PC-3 (cell line): ENCODE measurements at regions of chr6 and their contacts with region 1.

Region 1: DNA sequence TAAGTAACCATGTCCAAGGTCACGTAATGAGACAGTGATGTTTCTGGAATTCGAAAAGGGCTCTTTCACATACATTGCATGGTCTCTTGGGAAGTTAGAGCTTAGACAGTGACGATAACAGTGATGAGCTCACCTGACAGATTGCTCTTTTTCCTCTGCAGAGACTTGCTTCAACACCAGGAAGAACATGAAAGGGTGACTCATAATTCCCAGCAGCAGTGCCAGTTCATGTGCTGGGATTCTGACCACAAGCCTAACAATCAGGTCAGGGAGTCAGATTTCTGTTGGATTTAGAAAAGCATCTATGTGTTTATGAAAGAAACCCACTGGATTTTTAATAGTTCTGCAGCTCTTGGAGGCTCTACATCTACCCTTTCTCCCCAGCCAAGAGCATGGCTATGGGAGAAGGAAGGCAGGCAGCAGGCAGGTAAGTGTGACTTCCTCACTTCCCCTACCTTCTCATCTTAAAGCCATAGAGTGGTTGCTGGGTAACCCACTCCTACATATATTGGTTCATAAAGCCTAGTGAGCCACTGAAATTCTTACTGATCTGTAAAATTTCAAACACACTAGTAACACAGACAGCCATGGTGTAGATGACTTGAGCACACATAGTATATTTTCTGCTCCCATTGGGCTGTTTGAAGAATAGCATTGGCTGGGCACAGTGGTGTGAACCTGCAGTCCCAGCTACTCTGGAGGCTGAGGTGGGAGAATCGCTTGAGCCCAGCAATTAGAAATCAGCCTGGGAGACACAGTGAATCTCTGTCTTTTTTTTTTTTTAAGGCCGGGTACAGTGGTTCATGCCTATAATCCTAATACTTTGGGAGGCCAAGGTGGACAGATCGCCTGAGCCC is 44.4 kb upstream of the LOC128125822 start:
- DNase-seq: peak; percentile 92
- ATAC-seq: peak; percentile 83
- H3K4me3 ChIP-seq: no peak overlapping the region
- H3K27ac ChIP-seq: peak overlapping the region; percentile 86
- H3K4me1 ChIP-seq: peaks cover 28% of the 10 kb centered on the region
- H3K27me3 ChIP-seq: no peaks in the 10 kb centered on the region
- CTCF ChIP-seq: no peak

Region 2: GRCh38 chr6:63352587-63353285 is 175.2 kb before region 1 on chr6:
- CTCF ChIA-PET with region 1: no interaction called
- POLR2A ChIA-PET with region 1: no interaction called
- intact Hi-C with region 1: loop called (anchors 1 kb)
- DNase-seq: peak; percentile 57
- ATAC-seq: peak; percentile 85
- H3K4me3 ChIP-seq: no peak overlapping the region
- H3K27ac ChIP-seq: no peak overlapping the region
- H3K4me1 ChIP-seq: peaks cover 23% of the 10 kb centered on the region
- H3K27me3 ChIP-seq: no peaks in the 10 kb centered on the region
- CTCF ChIP-seq: peak; percentile 69

Region 3: GRCh38 chr6:63391203-63391970 is 136.5 kb before region 1 on chr6:
- CTCF ChIA-PET with region 1: interaction called, 10 read pairs
- POLR2A ChIA-PET with region 1: no interaction called
- intact Hi-C with region 1: no loop called
- DNase-seq: no peak
- ATAC-seq: no peak
- H3K4me3 ChIP-seq: no peak overlapping the region
- H3K27ac ChIP-seq: no peak overlapping the region
- H3K4me1 ChIP-seq: no peaks in the 10 kb centered on the region
- H3K27me3 ChIP-seq: no peaks in the 10 kb centered on the region
- CTCF ChIP-seq: no peak

Region 4: GRCh38 chr6:63571881-63572732 is 44.2 kb after region 1 on chr6 and contains the starts of genes LOC128125822 and PTP4A1:
- CTCF ChIA-PET with region 1: no interaction called
- POLR2A ChIA-PET with region 1: no interaction called
- intact Hi-C with region 1: loop called (anchors 2 kb)
- DNase-seq: peak; percentile 93
- ATAC-seq: peak; percentile 86
- H3K4me3 ChIP-seq: peak within 1 kb of the TSS; percentile 84
- H3K27ac ChIP-seq: peak within 1 kb of the TSS; percentile 99
- H3K4me1 ChIP-seq: peaks cover 18% of the 10 kb centered on the region
- H3K27me3 ChIP-seq: no peaks in the 10 kb centered on the region
- CTCF ChIP-seq: no peak
- total RNA-seq, gene PTP4A1: 29.9 and 45.7 TPM in 2 replicates